ENCODE measurements at regions of chr7 and their contacts with region 1.

Region 1: DNA sequence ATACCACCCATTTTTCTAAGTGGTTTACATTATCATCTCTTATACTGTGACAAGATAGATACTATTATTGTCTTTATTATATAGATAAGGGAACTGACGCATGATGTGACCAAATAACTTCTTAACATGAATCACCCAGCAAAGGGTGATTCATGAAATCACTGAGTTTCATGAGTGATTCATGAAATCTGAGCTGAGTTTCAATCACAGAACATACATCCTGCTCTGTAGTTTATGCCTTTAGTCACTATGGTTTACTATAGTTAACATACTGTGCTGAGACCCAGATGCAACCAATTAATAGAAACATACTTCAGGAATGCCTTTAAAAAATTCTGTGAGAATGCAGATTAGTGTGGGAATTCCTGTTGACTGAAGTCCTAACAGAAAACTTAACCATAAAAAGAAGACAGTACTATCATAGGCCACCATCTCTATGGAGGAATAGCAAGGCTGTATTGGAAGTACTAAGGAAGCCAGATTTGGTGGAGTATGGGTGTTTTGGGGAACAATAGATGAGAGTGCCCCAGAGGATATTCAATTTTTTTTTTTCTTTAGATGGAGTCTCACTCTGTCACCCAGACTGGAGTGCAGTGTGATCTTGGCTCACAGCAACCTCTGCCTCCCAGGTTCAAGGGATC is 43.1 kb upstream of the SEMA3A start:
- DNase-seq: peak; percentile 97
- ATAC-seq: peak; percentile 92
- H3K4me3 ChIP-seq: no peak overlapping the region
- H3K27ac ChIP-seq: peak overlapping the region; percentile 100
- H3K4me1 ChIP-seq: peaks cover 32% of the 10 kb centered on the region
- H3K27me3 ChIP-seq: no peaks in the 10 kb centered on the region
- CTCF ChIP-seq: no peak

Region 2: GRCh38 chr7:84058311-84059076 is 179.2 kb before region 1 on chr7:
- CTCF ChIA-PET with region 1: no interaction called
- POLR2A ChIA-PET with region 1: no interaction called
- intact Hi-C with region 1: loop called (anchors 2 kb)
- DNase-seq: peak; percentile 88
- ATAC-seq: peak; percentile 60
- H3K4me3 ChIP-seq: peak overlapping the region; percentile 39; the same call in 1 of the 2 replicates
- H3K27ac ChIP-seq: peak overlapping the region; percentile 93
- H3K4me1 ChIP-seq: peaks cover 59% of the 10 kb centered on the region
- H3K27me3 ChIP-seq: no peaks in the 10 kb centered on the region
- CTCF ChIP-seq: no peak

Region 3: DNA sequence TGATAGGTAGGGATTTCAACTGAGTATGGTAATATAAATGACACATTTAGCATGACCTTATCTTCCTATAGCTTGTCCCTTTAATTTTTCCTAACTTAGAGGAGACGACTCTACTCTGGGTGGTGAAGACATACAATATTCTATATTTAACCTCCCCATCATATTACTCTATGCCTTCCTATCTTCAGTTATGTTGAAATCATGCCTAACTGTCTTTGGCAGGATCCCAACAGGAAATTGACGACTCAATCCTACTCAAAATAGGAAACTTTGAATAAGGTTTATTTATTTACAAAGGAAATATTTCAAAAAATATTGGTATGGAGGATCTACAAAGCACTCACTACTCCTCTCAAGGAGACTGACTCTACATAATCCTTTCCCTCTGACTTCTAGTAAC is 19.0 kb before region 1 on chr7:
- CTCF ChIA-PET with region 1: no interaction called
- POLR2A ChIA-PET with region 1: no interaction called
- intact Hi-C with region 1: loop called (anchors 1 kb)
- DNase-seq: peak; percentile 87
- ATAC-seq: peak; percentile 59
- H3K4me3 ChIP-seq: no peak overlapping the region
- H3K27ac ChIP-seq: peak overlapping the region; percentile 91
- H3K4me1 ChIP-seq: peaks cover 18% of the 10 kb centered on the region
- H3K27me3 ChIP-seq: no peaks in the 10 kb centered on the region
- CTCF ChIP-seq: no peak

Region 4: DNA sequence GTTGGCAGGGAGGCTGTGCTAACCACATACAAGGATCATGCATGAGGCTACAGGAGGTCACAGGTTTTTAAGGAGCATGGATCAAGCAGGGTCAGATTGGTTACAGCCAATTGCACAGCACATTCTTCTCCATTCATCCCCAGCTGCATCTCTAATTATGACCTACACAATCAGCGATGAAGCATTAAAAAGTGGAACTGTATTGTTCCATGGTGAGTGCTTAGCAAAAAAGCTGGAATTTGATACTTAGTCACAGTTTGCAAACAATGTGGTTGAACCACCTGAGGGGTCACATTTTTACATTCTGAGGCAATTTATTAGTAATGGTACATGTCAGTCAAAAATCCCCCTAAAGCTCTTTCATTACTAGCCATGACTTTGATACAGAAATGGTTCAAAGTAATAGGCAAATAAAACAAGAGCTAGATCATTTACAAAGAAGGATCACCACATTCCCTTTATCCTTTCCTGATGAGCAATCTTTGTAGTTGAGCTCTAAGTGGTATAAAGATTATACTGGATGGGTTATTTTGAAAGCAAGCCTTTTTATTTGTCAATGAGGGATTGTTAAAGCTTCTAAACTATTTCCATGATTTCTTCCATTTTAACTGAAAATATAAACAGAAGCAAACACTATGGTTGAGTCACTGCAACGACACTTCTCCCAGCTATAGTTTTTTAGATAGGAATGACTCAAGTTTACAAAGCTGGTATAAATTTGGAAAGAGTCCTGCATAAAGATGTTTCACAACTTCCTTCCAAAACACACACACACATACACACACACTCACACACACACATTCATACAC is 174.7 kb after region 1 on chr7:
- CTCF ChIA-PET with region 1: no interaction called
- POLR2A ChIA-PET with region 1: no interaction called
- intact Hi-C with region 1: loop called (anchors 1 kb)
- DNase-seq: peak; percentile 96
- ATAC-seq: peak; percentile 91
- H3K4me3 ChIP-seq: peak overlapping the region; percentile 43; the same call in 1 of the 2 replicates
- H3K27ac ChIP-seq: peak overlapping the region; percentile 98
- H3K4me1 ChIP-seq: peaks cover 31% of the 10 kb centered on the region
- H3K27me3 ChIP-seq: no peaks in the 10 kb centered on the region
- CTCF ChIP-seq: no peak

Region 5: GRCh38 chr7:84529480-84530205 is 292.0 kb after region 1 on chr7:
- CTCF ChIA-PET with region 1: no interaction called
- POLR2A ChIA-PET with region 1: no interaction called
- intact Hi-C with region 1: loop called (anchors 5 kb)
- DNase-seq: peak; percentile 89
- ATAC-seq: peak; percentile 87
- H3K4me3 ChIP-seq: no peak overlapping the region
- H3K27ac ChIP-seq: peak overlapping the region; percentile 16
- H3K4me1 ChIP-seq: peaks cover 22% of the 10 kb centered on the region
- H3K27me3 ChIP-seq: no peaks in the 10 kb centered on the region
- CTCF ChIP-seq: no peak

Measured in PC-3 (cell line).